ENCODE measurements at regions of chr4 and their contacts with region 1.

Region 1: DNA sequence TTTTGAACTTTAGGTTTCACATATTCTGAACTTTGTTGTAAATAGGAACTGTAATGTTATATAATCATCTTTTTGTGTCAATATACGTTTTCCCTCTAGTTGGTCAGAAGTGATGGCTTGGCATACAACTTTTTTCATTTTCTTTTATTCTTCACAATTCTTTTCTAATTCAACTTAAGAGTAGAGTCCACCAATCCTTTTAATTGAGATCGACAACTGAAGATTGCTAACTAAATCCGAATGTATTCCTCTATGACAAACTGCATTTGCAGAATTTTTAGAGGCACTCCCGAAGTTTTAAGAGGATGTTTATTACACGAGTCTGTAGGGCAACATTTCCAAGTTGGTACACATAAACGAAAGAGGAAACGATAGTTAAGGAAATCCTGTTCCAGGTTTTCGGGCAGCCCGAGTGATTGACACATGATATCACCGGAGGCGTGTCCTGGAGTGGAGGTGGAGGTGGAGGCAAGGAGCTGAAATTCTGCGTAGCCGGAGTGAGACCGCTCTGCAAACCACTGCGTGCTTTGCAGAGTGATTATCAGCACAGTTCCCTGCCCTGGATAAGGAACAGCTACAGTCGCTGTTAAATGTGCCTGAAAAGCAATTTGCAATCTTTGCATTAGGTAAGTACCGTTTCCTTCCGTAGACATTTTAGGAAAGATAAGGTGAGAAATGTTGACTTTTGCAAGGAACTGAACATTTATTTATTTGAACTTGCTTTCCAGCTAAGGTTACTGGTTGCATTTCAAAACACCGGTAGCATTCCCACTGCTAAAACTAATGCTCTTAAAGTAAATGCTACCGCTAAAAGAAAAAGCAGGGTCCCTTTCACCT is at the start of gene SPRY1:
- DNase-seq: peak; percentile 94
- H3K4me3 ChIP-seq: peak within 1 kb of the TSS; percentile 74
- H3K27ac ChIP-seq: peak within 1 kb of the TSS; percentile 83 to 89
- H3K4me1 ChIP-seq: no peaks in the 10 kb centered on the region
- H3K27me3 ChIP-seq: no peaks in the 10 kb centered on the region
- CTCF ChIP-seq: no peak
- POLR2A ChIP-seq: peak; percentile 74
- total RNA-seq, gene SPRY1: 67.5 to 90.2 TPM

Region 2: GRCh38 chr4:123102897-123103471 is 293.5 kb before region 1 on chr4:
- intact Hi-C with region 1: loop called (anchors 10 kb)
- DNase-seq: no peak
- H3K4me3 ChIP-seq: no peak overlapping the region
- H3K27ac ChIP-seq: no peak overlapping the region
- H3K4me1 ChIP-seq: no peaks in the 10 kb centered on the region
- H3K27me3 ChIP-seq: no peaks in the 10 kb centered on the region
- CTCF ChIP-seq: peak; percentile 58 to 81 (median 67)
- POLR2A ChIP-seq: no peak

Region 3: DNA sequence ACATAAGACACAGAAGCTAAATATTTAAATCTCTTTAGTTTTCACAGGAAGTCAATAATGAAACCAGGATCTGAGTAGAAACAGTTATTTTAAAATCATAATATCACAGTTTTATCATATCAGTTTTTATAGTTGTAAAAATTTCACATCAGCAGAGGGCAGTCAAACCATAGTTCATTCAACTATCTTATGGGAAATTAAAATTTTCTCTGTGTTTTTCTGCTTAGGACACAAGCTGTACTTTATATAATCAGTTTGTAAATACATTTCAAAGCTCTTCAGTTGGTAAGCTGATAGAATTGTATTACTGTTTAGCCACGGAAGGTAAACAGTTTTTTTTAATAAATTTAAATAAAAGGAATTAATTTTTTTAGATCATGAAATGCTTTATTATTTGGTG is 269.3 kb before region 1 on chr4:
- intact Hi-C with region 1: loop called (anchors 5 kb)
- DNase-seq: no peak
- H3K4me3 ChIP-seq: no peak overlapping the region
- H3K27ac ChIP-seq: no peak overlapping the region
- H3K4me1 ChIP-seq: no peaks in the 10 kb centered on the region
- H3K27me3 ChIP-seq: no peaks in the 10 kb centered on the region
- CTCF ChIP-seq: peak in 3 of 4 experiments; percentile 6 to 42 (median 39)
- POLR2A ChIP-seq: no peak

Region 4: DNA sequence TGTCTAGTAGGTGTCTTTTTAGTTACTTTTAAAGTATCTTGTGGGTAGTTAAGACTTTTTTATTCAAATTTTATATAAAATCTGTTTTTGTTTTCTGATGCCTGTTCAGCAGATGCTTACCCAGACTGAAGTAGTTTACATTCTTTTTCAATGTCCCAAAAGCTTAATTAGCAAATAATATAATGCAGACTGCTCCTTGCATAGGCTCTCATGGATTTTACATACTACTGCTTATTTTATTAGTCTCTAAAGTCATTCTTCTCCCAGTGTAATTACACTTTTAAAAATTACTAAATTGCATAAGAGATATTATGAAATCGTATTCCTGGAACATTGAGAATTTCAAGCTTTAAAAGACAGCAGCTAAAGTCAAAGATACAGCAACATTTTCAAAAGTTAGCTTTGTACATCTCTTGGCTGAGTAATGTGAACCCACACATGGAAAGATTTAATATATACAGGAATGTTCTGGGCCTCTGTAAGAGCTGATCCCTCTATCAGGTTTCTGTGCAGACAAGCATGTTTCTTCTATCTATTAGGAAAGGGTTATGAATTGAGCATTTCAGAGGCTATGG is 148.4 kb before region 1 on chr4:
- intact Hi-C with region 1: loop called (anchors 5 kb)
- DNase-seq: no peak
- H3K4me3 ChIP-seq: no peak overlapping the region
- H3K27ac ChIP-seq: no peak overlapping the region
- H3K4me1 ChIP-seq: no peaks in the 10 kb centered on the region
- H3K27me3 ChIP-seq: no peaks in the 10 kb centered on the region
- CTCF ChIP-seq: no peak
- POLR2A ChIP-seq: no peak

Region 5: DNA sequence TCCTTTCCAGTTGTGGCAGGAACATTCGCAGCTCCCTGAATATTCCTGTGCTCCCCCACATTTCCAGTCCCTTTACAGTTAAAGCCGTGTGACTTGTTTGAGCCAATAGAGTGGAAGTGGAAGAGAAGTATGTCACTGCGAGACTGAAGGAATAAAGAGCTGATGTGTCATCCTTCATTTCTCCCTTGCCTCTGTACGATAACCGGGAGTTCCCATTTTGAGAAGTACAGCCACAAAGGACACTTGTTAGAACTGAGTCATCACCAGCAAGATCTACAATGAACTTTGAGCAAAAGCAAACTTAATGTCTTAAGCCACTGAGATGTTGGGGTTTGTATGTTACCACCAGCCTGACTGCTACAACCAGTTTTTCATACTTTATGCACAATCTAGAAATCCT is 92.4 kb after region 1 on chr4:
- intact Hi-C with region 1: no loop called
- DNase-seq: no peak
- H3K4me3 ChIP-seq: no peak overlapping the region
- H3K27ac ChIP-seq: no peak overlapping the region
- H3K4me1 ChIP-seq: no peaks in the 10 kb centered on the region
- H3K27me3 ChIP-seq: no peaks in the 10 kb centered on the region
- CTCF ChIP-seq: no peak
- POLR2A ChIP-seq: no peak

Region 6: GRCh38 chr4:123524958-123525628 is 128.6 kb after region 1 on chr4:
- intact Hi-C with region 1: no loop called
- DNase-seq: no peak
- H3K4me3 ChIP-seq: no peak overlapping the region
- H3K27ac ChIP-seq: no peak overlapping the region
- H3K4me1 ChIP-seq: no peaks in the 10 kb centered on the region
- H3K27me3 ChIP-seq: no peaks in the 10 kb centered on the region
- CTCF ChIP-seq: no peak
- POLR2A ChIP-seq: no peak

Region 7: DNA sequence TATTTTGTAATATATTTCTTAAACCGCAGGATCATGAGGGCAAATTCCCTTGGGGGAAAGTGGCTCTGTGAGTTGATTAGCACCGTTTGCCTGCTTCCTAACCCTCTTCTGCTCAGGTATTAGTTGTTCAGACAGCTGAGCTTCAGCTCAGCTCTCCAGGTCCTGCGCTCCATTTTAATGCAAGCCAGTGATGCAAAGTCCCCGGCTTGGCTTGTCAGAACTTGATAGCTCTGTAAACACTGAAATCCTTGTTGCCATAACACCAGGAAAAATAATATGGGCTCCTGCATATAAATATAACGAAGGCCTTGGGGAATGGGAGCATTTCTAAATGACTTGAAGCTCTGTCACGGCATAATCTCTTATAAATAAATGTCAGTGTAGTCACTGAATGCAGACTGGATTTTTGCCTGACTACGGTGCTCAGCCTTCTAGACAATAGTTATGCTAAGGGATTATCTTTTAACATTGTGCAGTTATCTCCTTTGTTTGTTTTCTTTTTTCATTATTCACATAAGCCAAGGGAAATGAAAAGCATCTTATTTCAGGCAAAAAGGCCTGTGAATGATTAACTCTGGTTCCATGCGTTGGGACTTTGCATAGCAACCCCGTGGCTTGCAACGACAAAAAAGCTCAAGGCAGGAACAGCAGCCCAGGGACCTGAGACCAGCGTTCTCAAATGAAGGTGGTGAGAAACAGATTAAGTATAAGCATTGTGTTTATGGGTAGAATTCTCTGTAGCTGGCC is 253.3 kb after region 1 on chr4:
- intact Hi-C with region 1: loop called (anchors 5 kb)
- DNase-seq: peak; percentile 60
- H3K4me3 ChIP-seq: no peak overlapping the region
- H3K27ac ChIP-seq: peak overlapping the region; percentile 39 to 42
- H3K4me1 ChIP-seq: no peaks in the 10 kb centered on the region
- H3K27me3 ChIP-seq: no peaks in the 10 kb centered on the region
- CTCF ChIP-seq: no peak
- POLR2A ChIP-seq: no peak

Region 8: DNA sequence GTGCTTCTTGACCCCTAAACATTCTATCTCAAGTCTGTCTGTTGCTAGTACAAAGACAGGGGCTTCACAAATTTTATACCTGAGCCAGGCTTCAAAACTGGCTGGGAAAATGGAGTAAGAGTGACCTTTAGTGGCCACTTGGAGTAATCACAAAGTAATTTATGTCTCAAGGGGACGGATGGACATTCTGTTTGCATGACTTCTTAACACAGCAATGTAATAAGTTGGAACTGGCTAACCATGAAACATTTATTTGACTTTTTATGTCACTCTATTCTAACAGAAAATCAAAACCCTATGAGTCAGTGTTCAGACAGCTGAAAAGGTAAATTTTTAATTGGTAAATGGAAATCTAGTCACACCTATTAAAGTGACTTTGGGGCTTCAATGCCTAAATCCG is 715.4 kb after region 1 on chr4:
- intact Hi-C with region 1: loop called (anchors 5 kb)
- DNase-seq: peak; percentile 23
- H3K4me3 ChIP-seq: no peak overlapping the region
- H3K27ac ChIP-seq: no peak overlapping the region
- H3K4me1 ChIP-seq: no peaks in the 10 kb centered on the region
- H3K27me3 ChIP-seq: no peaks in the 10 kb centered on the region
- CTCF ChIP-seq: peak; percentile 20 to 69 (median 50)
- POLR2A ChIP-seq: no peak

Region 9: DNA sequence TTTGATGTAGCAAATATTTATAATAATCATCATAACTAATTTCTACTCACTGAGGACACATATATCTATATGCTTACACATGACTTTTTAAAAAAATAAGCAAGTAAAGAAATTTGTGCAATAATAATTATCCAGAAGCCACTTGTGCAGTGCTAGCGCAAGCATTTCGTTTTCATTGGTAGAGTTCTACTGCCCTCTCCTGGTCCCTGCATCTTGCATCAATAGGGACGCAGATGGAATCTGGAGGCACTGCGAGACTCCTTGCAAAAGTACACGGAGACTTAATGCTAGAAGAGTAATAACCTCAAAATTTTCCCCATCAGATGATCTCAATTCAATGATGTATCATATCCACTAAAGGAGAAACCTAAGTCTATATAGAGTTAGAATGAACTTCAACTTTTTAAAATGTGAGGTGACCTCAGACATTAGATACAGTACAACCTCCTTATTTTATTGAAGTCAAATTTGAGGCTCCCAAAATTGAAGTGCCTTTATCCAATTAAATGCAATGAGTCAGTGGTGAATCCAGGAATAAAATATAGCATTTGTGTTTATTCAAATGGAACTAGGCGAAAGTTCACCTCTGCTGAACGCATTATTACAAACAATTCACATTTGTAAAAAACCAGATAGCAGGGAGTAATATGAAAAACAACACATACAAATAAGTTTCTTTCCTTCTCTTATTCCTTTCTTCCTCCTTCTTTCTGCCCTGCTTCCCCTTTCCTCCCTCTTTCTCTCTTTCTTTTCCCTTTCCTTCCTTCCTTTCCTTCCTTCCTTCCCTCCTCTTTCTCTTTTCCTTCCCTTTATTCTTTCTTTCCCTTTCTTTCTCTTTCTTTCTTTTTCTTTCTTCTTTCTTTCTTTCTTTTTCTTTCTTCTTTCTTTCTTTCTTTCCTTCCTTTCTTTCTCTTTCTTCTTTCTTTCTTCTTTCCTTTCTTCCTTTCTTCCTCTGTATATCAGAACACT is 866.0 kb after region 1 on chr4:
- intact Hi-C with region 1: loop called (anchors 10 kb)
- DNase-seq: peak; percentile 59
- H3K4me3 ChIP-seq: no peak overlapping the region
- H3K27ac ChIP-seq: no peak overlapping the region
- H3K4me1 ChIP-seq: no peaks in the 10 kb centered on the region
- H3K27me3 ChIP-seq: no peaks in the 10 kb centered on the region
- CTCF ChIP-seq: peak; percentile 62 to 79 (median 72)
- POLR2A ChIP-seq: no peak

Measured in prostate gland (tissue), 2 donors.